Left ventricle myocardium inferior (tissue), 1 donor: ENCODE measurements at regions of chr4 and their contacts with region 1.

Region 1: DNA sequence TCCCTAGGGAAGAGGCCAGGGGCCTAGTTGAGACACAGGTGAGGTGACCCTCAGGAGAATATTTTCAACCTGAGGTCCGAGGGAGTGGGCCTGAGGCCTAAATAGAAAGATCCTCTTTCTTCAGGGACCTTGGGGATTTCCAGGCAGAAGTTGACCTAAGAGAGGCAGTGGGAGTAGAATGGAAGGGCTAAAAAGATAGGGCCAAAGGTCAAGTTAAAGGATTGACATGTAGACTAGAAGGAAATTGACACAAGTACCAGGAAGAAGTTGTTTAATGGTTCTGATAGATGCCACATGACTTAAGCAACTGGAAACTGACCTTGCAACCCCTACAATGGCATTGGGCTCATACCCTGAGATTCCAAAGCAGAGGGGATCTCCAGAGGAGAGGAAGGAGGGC is 76.9 kb downstream of the SHROOM3 start:
- DNase-seq: no peak
- H3K4me3 ChIP-seq: no peak overlapping the region
- H3K27ac ChIP-seq: no peak overlapping the region
- H3K4me1 ChIP-seq: no peaks in the 10 kb centered on the region
- H3K27me3 ChIP-seq: no peaks in the 10 kb centered on the region
- CTCF ChIP-seq: no peak

Region 2: GRCh38 chr4:76626686-76627465 is 114.9 kb after region 1 on chr4:
- intact Hi-C with region 1: no loop called
- DNase-seq: no peak
- H3K4me3 ChIP-seq: no peak overlapping the region
- H3K27ac ChIP-seq: no peak overlapping the region
- H3K4me1 ChIP-seq: peaks cover 41% of the 10 kb centered on the region
- H3K27me3 ChIP-seq: no peaks in the 10 kb centered on the region
- CTCF ChIP-seq: peak; percentile 18

Region 3: GRCh38 chr4:76758290-76758882 is 246.4 kb after region 1 on chr4:
- intact Hi-C with region 1: loop called (anchors 5 kb)
- DNase-seq: no peak
- H3K4me3 ChIP-seq: no peak overlapping the region
- H3K27ac ChIP-seq: no peak overlapping the region
- H3K4me1 ChIP-seq: peaks cover 18% of the 10 kb centered on the region
- H3K27me3 ChIP-seq: no peaks in the 10 kb centered on the region
- CTCF ChIP-seq: peak; percentile 82

Region 4: GRCh38 chr4:77044461-77045150 is 532.7 kb after region 1 on chr4:
- intact Hi-C with region 1: loop called (anchors 5 kb)
- DNase-seq: no peak
- H3K4me3 ChIP-seq: no peak overlapping the region
- H3K27ac ChIP-seq: no peak overlapping the region
- H3K4me1 ChIP-seq: peaks cover 5% of the 10 kb centered on the region
- H3K27me3 ChIP-seq: no peaks in the 10 kb centered on the region
- CTCF ChIP-seq: peak; percentile 60